Pancreas (tissue), 10 donors: ENCODE measurements at regions of chr11 and their contacts with region 1.

Region 1: GRCh38 chr11:2409611-2410468 is 9.3 kb downstream of the TSSC4 start:
- DNase-seq: no peak
- ATAC-seq: peak in 2 of 4 donors; percentile 17 to 23
- H3K4me3 ChIP-seq: no peak overlapping the region
- H3K27ac ChIP-seq: no peak overlapping the region
- H3K4me1 ChIP-seq: no peaks in the 10 kb centered on the region
- H3K27me3 ChIP-seq: no peaks in the 10 kb centered on the region
- CTCF ChIP-seq: no peak

Region 2: DNA sequence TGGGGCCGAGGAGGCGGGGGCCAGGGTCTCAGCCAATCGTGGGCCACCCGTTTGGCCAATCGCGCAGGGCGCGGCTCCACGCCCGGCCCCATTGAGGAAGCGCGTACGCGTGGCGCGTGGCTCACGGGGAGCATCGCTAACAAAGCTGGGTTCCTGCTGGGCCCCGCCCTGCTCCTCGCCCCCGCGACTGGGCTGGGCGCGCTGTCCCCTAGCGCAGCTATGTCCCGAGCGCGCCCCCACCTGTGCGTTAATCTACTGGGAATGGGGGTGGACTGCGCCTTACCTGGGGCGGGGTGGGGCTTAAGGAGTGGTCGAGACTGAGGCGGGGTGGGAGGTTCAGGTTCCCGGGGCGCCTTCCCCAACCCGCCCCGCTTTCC is 138.8 kb before region 1 on chr11:
- intact Hi-C with region 1: no loop called
- DNase-seq: peak in 1 of 6 donors; percentile 61
- ATAC-seq: peak in 3 of 4 donors; percentile 13 to 47 (median 22)
- H3K4me3 ChIP-seq: peak overlapping the region in 1 of 4 donors; percentile 51
- H3K27ac ChIP-seq: no peak overlapping the region
- H3K4me1 ChIP-seq: peaks cover 0 to 3% (median 0%) of the 10 kb centered on the region in 3 donors
- H3K27me3 ChIP-seq: peaks cover 0 to 9% (median 3%) of the 10 kb centered on the region in 4 donors
- CTCF ChIP-seq: no peak

Region 3: DNA sequence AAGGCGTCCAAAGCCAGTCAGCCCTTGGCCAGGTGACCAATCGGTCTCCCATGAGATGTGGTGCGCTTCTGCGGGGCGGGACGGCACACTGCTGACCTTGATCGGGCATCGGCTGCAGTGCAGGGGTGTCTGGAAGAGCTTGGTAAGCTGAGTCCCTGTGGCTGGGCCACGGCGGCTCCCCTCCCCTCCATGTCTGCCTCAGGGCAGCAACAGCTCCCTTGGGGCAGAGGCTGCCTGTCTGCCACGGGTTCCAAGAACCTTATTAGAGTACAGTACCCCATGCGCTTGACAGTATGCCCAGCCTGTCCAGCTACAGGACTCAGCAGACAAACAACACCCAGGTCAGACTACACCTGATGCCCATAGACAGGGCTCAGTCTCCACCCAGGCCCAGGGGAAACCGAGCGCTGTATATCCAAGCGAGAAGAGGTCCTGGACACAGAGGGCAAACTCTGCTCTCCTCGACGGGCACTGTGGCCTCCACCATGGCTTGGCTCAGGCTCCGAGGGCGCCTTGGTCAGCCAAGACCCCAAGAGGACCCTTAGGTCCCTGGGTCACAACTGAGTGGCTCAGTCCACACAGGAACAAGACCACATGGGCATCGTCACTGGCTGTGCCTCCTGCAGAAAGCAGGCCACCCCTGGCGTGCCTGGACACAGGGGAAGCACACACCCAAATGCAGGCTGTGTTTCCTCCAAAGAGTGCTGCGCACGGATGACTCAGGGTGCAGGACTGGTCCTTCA is 89.1 kb before region 1 on chr11:
- intact Hi-C with region 1: loop called in 1 of 3 experiments (anchors 5 kb)
- DNase-seq: no peak
- ATAC-seq: no peak
- H3K4me3 ChIP-seq: no peak overlapping the region
- H3K27ac ChIP-seq: no peak overlapping the region
- H3K4me1 ChIP-seq: no peaks in the 10 kb centered on the region
- H3K27me3 ChIP-seq: no peaks in the 10 kb centered on the region
- CTCF ChIP-seq: no peak

Region 4: GRCh38 chr11:2342981-2343380 is 66.9 kb before region 1 on chr11:
- intact Hi-C with region 1: no loop called
- DNase-seq: peak in 1 of 6 donors; percentile 16
- ATAC-seq: peak in 2 of 4 donors; percentile 55 to 66
- H3K4me3 ChIP-seq: no peak overlapping the region
- H3K27ac ChIP-seq: no peak overlapping the region
- H3K4me1 ChIP-seq: no peaks in the 10 kb centered on the region
- H3K27me3 ChIP-seq: no peaks in the 10 kb centered on the region
- CTCF ChIP-seq: no peak